ENCODE measurements at regions of chr5 and their contacts with region 1.

Region 1: DNA sequence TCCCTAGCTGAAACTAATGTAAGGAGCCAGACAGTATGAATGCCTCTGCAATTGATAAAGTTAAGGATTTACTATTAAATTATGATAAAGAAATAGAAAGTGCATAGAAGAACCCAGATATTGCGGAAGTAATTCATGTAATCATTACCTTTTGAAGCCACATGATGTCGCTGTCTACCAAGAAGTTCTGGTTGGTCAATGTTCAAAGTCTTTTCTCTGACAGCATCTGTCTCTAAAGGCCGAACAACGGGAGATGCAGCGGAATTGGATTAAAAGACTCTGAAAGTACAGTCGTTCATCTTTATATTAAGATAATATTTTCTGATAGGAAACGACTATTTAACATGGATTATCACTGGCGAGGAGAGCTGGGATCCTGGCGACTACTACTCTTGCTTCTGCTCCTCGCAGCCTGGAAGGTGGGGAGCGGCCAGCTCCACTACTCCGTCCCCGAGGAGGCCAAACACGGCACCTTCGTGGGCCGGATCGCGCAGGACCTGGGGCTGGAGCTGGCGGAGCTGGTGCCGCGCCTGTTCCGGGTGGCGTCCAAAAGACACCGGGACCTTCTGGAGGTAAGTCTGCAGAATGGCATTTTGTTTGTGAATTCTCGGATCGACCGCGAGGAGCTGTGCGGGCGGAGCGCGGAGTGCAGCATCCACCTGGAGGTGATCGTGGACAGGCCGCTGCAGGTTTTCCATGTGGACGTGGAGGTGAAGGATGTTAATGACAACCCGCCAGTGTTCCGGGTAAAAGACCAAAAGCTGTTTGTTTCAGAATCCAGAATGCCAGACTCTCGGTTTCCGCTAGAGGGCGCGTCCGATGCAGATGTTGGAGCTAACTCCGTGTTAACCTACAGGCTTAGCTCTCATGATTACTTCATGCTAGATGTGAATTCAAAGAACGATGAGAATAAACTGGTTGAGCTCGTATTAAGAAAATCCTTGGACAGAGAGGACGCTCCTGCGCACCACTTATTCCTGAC is at the start of gene PCDHA8:
- DNase-seq: peak; percentile 73
- ATAC-seq: peak; percentile 92
- H3K4me3 ChIP-seq: peak within 1 kb of the TSS; percentile 74
- H3K27ac ChIP-seq: no peak within 1 kb of the TSS
- H3K4me1 ChIP-seq: no peaks in the 10 kb centered on the region
- H3K27me3 ChIP-seq: no peaks in the 10 kb centered on the region
- CTCF ChIP-seq: peak; percentile 69
- total RNA-seq, gene PCDHA8: 0.11 TPM in 1 of 2 replicates, not detected in the other

Region 2: DNA sequence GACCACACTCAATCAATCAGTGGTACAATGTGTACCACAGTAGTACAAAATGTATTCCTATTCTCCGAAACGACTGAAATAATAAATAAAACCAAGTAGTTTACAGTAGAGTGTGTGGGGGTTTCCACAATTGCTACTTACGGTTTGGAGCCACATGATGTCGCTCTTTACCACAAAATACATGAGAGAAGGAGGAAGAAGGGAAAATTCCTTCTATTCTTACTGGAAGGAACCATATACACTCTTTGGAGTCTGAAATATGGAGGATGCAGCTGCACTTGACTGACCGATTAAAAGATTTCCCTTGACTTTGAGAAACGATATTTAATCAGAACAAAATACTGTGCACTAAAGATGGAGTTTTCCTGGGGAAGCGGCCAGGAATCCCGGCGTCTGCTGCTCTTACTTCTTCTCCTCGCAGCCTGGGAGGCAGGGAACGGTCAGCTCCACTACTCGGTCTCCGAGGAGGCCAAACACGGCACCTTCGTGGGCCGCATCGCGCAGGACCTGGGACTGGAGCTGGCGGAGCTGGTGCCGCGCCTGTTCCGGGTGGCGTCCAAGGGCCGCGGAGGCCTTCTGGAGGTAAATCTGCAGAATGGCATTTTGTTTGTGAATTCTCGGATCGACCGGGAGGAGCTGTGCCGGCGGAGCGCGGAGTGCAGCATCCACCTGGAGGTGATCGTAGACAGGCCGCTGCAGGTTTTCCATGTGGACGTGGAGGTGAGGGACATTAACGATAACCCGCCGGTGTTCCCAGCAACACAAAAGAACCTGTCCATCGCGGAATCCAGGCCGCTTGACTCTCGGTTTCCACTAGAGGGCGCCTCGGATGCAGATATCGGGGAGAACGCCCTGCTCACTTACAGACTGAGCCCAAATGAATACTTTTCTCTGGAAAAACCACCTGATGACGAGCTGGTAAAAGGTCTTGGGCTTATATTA is 34.2 kb before region 1 on chr5 and contains the start of gene PCDHA4:
- CTCF ChIA-PET with region 1: no interaction called
- POLR2A ChIA-PET with region 1: no interaction called
- intact Hi-C with region 1: loop called (anchors 2 kb)
- DNase-seq: peak; percentile 59
- ATAC-seq: peak; percentile 89
- H3K4me3 ChIP-seq: peak within 1 kb of the TSS; percentile 72
- H3K27ac ChIP-seq: no peak within 1 kb of the TSS
- H3K4me1 ChIP-seq: no peaks in the 10 kb centered on the region
- H3K27me3 ChIP-seq: no peaks in the 10 kb centered on the region
- CTCF ChIP-seq: peak; percentile 57
- total RNA-seq, gene PCDHA4: 1.5 and 1.6 TPM in 2 replicates

Region 3: DNA sequence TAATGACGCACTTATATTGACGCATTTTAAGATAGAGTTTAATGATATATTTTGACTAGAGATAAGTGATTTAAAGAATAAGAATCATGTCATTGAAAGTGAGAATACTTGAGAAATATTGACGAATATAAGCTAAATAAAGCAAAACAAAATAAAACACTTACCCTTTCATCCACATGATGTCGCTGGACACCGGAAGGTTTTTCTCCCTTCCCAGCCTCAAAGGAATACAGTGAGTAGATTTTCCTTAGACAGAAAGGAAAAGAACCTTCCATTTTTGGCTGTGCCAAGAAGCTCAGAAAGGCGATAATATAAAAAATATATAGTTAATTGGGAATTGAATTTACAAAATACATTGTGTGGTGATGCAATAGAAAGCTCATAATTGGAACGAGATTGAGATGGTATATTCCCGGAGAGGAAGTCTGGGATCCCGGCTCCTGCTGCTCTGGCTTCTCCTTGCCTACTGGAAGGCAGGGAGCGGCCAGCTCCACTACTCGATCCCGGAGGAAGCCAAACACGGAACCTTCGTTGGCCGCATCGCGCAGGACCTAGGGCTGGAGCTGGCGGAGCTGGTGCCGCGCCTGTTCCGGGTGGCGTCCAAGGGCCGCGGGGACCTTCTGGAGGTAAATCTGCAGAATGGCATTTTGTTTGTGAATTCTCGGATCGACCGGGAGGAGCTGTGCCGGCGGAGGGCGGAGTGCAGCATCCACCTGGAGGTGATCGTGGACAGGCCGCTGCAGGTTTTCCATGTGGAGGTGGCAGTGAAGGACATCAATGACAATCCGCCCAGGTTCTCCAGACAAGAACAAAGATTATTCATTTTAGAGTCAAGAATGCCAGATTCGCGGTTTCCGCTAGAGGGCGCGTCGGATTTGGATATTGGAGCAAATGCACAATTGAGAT is 19.6 kb before region 1 on chr5 and contains the start of gene PCDHA5:
- CTCF ChIA-PET with region 1: interaction called, 34 read pairs
- POLR2A ChIA-PET with region 1: no interaction called
- intact Hi-C with region 1: no loop called
- DNase-seq: peak; percentile 83
- ATAC-seq: peak; percentile 82
- H3K4me3 ChIP-seq: peak within 1 kb of the TSS; percentile 76
- H3K27ac ChIP-seq: no peak within 1 kb of the TSS
- H3K4me1 ChIP-seq: no peaks in the 10 kb centered on the region
- H3K27me3 ChIP-seq: no peaks in the 10 kb centered on the region
- CTCF ChIP-seq: peak; percentile 69
- total RNA-seq, gene PCDHA5: 1.3 and 1.5 TPM in 2 replicates

Region 4: GRCh38 chr5:140875066-140876065 is 34.1 kb after region 1 on chr5 and contains the start of gene PCDHA12:
- CTCF ChIA-PET with region 1: interaction called, 5 read pairs
- POLR2A ChIA-PET with region 1: no interaction called
- intact Hi-C with region 1: loop called (anchors 1 kb)
- DNase-seq: peak; percentile 82
- ATAC-seq: peak; percentile 80
- H3K4me3 ChIP-seq: peak within 1 kb of the TSS; percentile 86
- H3K27ac ChIP-seq: peak within 1 kb of the TSS; percentile 42; the same call in 1 of the 2 replicates
- H3K4me1 ChIP-seq: peaks cover 14% of the 10 kb centered on the region
- H3K27me3 ChIP-seq: no peaks in the 10 kb centered on the region
- CTCF ChIP-seq: peak; percentile 67
- total RNA-seq, gene PCDHA12: 7.0 and 8.2 TPM in 2 replicates

Region 5: DNA sequence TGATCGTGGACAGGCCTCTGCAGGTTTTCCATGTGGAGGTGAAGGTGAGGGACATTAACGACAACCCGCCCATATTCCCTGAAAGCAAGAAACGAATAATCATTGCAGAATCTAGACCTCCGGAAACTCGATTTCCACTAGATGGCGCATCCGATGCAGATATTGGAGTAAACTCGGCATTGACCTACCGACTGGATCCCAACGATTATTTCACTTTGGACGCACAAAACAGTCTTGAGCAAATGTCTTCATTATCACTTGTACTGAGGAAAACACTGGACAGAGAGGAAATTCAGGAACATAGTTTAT is 41.3 kb after region 1 on chr5:
- CTCF ChIA-PET with region 1: interaction called, 5 read pairs
- POLR2A ChIA-PET with region 1: no interaction called
- intact Hi-C with region 1: loop called (anchors 2 kb)
- DNase-seq: peak; percentile 81
- ATAC-seq: peak; percentile 74
- H3K4me3 ChIP-seq: peak overlapping the region; percentile 73
- H3K27ac ChIP-seq: 0 out of 2 replicates have a peak overlapping the region, but pooled peaks have one; percentile 33
- H3K4me1 ChIP-seq: peaks cover 8% of the 10 kb centered on the region; the same call in 1 of the 2 replicates
- H3K27me3 ChIP-seq: no peaks in the 10 kb centered on the region
- CTCF ChIP-seq: peak; percentile 59

Measured in PC-3 (cell line).